AG04450 (cell line): ENCODE measurements at regions of chr2 and their contacts with region 1.

Region 1: GRCh38 chr2:10883801-10884478 is 27.8 kb upstream of the KCNF1 start:
- DNase-seq: no peak
- H3K4me3 ChIP-seq: no peak overlapping the region
- H3K27ac ChIP-seq: no peak overlapping the region
- H3K27me3 ChIP-seq: peaks cover 7% of the 10 kb centered on the region
- CTCF ChIP-seq: no peak

Region 2: DNA sequence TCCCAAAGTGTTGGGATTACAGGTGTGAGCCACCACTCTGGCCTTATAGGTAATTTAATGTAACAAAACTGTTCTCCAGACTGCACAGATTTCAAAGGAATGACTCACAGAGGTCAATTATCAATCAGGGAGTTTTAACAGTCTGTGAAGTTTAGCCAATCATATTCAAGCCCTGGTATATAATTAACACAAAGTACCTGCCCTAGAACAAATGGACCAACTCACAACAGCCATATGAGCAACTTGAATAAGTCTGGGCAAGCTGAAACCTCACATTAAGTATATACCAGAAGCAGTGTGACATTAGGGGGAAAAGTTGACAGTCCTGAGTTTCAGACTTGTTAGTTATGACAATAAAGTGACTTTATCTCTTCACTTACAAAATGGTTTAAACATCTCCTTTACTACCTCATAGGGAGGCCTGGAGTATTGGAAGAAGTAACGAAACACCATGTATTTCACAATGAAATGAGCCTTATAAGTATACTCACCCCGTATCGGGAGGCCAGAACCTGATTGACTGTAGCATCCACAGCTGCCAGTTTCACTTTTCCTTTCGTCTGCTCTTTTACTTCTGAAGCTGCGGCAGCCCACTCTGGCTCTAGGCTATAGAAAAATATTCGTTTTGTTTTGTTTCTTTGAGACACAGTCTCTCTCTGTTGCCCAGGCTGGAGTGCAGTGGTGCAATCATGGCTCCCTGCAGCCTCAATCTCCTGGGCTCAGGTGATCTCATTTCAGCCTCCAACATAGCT is 93.5 kb before region 1 on chr2:
- CTCF ChIA-PET with region 1: no interaction called
- POLR2A ChIA-PET with region 1: no interaction called
- DNase-seq: no peak
- H3K4me3 ChIP-seq: no peak overlapping the region
- H3K27ac ChIP-seq: no peak overlapping the region
- H3K27me3 ChIP-seq: no peaks in the 10 kb centered on the region
- CTCF ChIP-seq: no peak

Region 3: GRCh38 chr2:10897956-10898355 is 14.0 kb after region 1 on chr2:
- CTCF ChIA-PET with region 1: no interaction called
- POLR2A ChIA-PET with region 1: no interaction called
- DNase-seq: no peak
- H3K4me3 ChIP-seq: no peak overlapping the region
- H3K27ac ChIP-seq: no peak overlapping the region
- H3K27me3 ChIP-seq: peaks cover 11% of the 10 kb centered on the region
- CTCF ChIP-seq: no peak

Region 4: DNA sequence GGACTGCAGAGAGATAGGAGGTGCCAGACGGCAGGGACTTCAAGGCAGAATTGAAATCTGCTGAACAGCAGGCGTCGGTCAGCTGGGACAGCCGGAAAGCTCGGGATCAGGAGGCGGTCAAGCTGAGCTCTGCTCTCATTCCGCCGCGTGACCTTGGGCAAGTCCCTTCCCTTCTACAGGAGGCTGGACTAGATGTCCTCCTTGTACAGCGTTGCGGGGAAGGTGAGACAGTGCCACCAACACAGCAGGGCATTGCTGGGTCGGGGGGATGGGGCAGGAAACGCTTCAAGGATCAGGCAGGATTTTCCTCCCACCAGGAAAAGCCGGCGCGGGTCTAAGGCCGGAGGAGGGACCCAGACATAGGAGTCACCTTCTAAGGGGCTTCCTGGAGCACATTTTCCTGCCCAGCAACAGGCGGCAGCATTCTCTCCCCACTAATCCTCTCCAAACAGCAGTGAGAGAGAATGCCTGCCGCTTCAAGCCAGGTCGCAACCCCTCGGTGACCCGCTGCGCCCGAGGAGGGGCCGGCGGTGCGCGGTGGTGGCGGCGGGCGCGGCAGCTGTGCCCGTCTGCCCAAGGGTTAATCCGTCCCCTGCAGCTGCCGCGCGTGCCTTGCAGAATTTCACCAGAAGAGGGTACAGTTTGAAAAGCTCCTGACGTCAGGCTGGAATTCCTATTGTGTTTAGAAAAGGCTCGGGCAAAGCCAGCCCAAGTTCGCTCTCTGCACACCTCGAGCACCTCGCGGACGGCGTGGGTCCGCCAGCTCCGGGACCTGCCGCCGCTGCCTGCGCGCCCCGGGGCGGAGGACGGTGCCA is 27.5 kb after region 1 on chr2 and contains the start of gene KCNF1:
- CTCF ChIA-PET with region 1: no interaction called
- POLR2A ChIA-PET with region 1: no interaction called
- DNase-seq: no peak
- H3K4me3 ChIP-seq: peak within 1 kb of the TSS; percentile 53
- H3K27ac ChIP-seq: no peak within 1 kb of the TSS
- H3K27me3 ChIP-seq: peaks cover 6% of the 10 kb centered on the region
- CTCF ChIP-seq: peak; percentile 40
- polyA plus RNA-seq, gene KCNF1: 1.0 and 1.1 TPM in 2 replicates

Region 5: GRCh38 chr2:11118761-11119160 is 234.8 kb after region 1 on chr2:
- CTCF ChIA-PET with region 1: no interaction called
- POLR2A ChIA-PET with region 1: interaction called, 10 read pairs
- DNase-seq: no peak
- H3K4me3 ChIP-seq: no peak overlapping the region
- H3K27ac ChIP-seq: peak overlapping the region; percentile 21
- H3K27me3 ChIP-seq: peaks cover 5% of the 10 kb centered on the region
- CTCF ChIP-seq: no peak